ENCODE measurements at regions of chr10 and their contacts with region 1.

Region 1: DNA sequence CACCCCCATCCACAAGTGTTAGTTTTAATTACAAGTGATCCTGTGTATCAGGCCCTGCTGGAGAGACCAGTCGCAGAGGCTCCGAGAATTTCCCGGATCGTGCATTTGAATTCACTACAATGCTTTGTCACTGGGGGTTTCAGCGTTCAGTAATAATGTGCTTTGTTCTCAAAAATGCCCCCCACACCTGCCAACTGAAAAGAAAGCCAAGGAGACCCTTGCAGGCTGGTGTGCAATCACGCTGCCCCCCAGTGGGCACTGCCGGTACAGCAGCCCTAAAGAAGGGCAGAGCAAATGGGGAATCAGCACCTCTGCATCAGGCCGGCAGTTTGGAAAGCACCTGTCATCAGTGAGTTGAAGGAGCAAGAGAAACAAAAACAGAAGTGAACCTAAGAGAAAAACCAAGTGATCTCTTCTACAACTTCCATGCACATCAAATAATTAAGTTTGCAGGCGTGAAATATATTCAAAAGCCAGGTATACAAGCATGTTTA is 177.6 kb downstream of the PARD3 start:
- DNase-seq: peak in 5 of 6 donors; percentile 25 to 90 (median 59)
- ATAC-seq: peak; percentile 71 to 87 (median 83)
- H3K4me3 ChIP-seq: no peak overlapping the region
- H3K27ac ChIP-seq: no peak overlapping the region
- H3K4me1 ChIP-seq: peaks cover 0 to 11% (median 4%) of the 10 kb centered on the region in 3 donors
- H3K27me3 ChIP-seq: no peaks in the 10 kb centered on the region
- CTCF ChIP-seq: peak; percentile 81 to 97 (median 90)

Region 2: DNA sequence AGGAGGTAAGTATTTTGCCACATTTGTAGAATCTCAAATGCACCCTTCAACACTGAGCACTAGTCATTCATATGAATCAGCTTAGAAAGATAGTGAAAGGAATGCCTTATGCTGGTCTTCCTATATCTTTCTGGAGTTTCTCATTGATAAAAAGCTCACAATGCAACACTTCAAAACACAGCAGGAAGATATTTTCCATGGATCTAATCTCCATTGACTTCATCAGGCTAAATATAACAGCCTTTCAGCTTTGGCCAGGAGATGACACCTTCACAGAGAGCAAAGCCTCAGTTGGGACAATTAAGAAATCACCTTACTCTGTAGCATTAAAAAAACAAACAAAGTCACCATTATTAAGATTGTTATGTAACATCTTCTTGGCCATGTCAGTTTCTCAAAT is 1309.7 kb before region 1 on chr10:
- intact Hi-C with region 1: loop called in 1 of 3 experiments (anchors 10 kb)
- DNase-seq: no peak
- ATAC-seq: no peak
- H3K4me3 ChIP-seq: no peak overlapping the region
- H3K27ac ChIP-seq: no peak overlapping the region
- H3K4me1 ChIP-seq: peaks cover 0 to 12% (median 10%) of the 10 kb centered on the region in 3 donors
- H3K27me3 ChIP-seq: no peaks in the 10 kb centered on the region
- CTCF ChIP-seq: no peak

Region 3: DNA sequence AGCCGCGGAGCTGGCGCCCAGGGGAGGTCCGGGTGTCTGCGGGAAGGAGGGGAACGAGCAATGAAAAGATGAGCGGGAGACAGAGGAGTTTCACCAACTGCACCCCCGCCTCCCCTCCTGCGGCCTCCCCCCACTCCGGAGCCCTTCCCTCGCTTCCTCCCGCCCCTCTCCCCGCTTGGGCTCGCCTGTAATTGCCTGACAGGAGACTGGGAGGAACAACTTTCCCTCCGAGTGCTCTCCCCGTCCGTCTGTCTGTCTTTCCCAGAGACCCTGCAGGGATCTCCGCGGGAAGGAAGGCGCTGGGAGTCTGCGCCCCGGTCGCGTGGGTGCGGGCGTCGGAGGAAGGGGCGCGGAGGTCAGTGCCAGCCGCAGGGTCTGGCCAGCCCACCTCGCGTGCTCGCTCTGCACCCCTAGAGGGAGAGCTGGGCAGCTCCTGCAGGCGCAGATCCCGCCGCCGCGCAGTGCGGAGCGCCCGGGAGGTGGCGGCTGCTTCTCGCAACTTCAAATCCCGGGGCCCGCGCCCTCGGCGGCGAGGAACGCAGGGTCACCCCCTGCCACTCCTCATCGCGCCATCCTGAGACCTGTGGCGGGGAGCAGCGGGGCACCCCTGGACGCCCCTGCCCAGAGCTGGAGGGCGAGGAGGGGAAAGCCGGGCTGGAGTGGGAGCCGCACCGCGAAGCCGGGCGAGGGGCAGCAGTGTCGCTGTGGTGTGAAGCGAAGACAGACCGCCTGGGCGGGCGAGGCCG is 1302.5 kb before region 1 on chr10:
- intact Hi-C with region 1: loop called in 1 of 3 experiments (anchors 5 kb)
- DNase-seq: peak; percentile 67 to 88 (median 69)
- ATAC-seq: peak; percentile 64 to 85 (median 76)
- H3K4me3 ChIP-seq: peak overlapping the region; percentile 54 to 78 (median 69)
- H3K27ac ChIP-seq: peak overlapping the region; percentile 79 to 94 (median 92)
- H3K4me1 ChIP-seq: peaks cover 0 to 15% (median 0%) of the 10 kb centered on the region in 3 donors
- H3K27me3 ChIP-seq: no peaks in the 10 kb centered on the region
- CTCF ChIP-seq: peak; percentile 12 to 41 (median 30)